ENCODE measurements at regions of chr4 and their contacts with region 1.

Region 1: DNA sequence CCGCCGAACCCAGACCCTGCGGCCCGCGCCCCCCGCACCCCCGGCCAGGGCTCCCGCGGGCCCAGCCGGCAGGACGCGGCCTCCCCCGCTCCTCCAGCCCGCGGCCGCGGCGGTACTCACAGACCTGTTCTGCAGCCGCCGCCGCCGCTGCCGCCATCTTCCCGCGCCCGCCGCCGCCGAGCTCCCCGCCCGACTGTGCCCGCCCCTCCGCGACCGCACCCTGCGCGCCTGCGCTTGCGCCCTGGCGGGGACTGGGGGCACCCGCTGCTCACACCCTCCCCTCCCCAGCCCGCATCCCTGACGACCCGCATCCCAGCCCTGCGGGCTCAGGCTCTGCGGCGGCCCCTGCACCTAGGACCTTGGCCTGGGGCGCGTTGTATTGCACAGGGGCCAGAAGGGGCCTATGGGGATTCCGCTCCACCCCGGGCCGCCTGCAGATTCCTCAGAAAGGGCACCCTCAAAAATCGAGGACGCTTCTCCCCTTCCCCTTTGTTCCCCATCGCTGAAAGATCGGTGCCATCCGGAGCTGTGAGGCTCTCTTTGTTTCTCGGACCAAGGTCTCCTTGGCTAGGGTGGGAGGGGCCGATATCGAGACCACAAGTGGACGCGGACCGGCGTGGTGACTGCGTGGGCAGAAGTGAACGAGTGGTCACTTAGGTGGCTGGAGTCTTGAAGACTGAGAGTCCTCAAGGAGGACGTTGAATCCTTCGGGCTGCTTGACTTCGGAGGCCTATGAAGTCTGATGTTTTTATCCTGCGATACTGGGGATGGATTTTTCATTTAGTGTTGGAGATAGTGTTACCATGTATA is at the start of gene SGCB:
- DNase-seq: peak; percentile 53
- H3K4me3 ChIP-seq: peak within 1 kb of the TSS; percentile 73 to 82
- H3K27ac ChIP-seq: peak within 1 kb of the TSS; percentile 66 to 68
- H3K4me1 ChIP-seq: no peaks in the 10 kb centered on the region
- H3K27me3 ChIP-seq: no peaks in the 10 kb centered on the region
- CTCF ChIP-seq: no peak
- POLR2A ChIP-seq: peak; percentile 20
- total RNA-seq, gene SGCB: 17.1 to 44.0 TPM

Region 2: GRCh38 chr4:51842554-51843308 is 195.6 kb before region 1 on chr4 and contains the start of gene DCUN1D4:
- intact Hi-C with region 1: loop called (anchors 5 kb)
- DNase-seq: peak; percentile 100
- H3K4me3 ChIP-seq: peak within 1 kb of the TSS; percentile 89 to 94
- H3K27ac ChIP-seq: peak within 1 kb of the TSS; percentile 89 to 93
- H3K4me1 ChIP-seq: no peaks in the 10 kb centered on the region
- H3K27me3 ChIP-seq: no peaks in the 10 kb centered on the region
- CTCF ChIP-seq: peak; percentile 52 to 93 (median 75)
- POLR2A ChIP-seq: peak; percentile 78
- total RNA-seq, gene DCUN1D4: 23.0 to 49.1 TPM

Region 3: DNA sequence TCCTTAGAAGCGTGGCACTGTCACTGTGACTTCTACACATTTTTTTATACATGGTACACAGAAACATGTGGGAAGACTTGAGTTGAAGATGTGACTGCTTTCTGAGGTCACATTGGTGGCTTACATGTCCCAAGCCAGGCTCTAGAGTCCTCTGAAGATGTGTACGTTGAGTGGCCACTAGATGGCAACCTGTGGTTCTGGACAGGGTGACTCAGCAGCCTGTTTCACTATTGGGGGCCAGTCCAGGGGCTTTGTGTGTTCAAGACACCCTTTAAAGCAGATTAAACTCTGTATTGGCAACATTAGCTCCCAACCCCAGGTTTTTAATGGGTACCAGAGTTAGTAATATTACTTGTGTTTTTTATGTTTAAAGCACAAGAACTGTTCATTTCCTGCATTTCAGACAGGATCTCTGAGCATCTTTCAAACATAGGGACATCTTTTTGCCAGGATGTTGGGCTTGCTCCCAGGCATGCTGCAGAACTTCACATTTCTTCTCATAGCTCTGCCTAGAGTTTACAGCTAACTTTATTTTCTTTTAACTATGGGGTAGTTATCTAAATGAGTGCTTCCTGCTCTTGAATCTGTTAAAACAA is 142.4 kb before region 1 on chr4:
- intact Hi-C with region 1: loop called (anchors 5 kb)
- DNase-seq: peak; percentile 51
- H3K4me3 ChIP-seq: no peak overlapping the region
- H3K27ac ChIP-seq: no peak overlapping the region
- H3K4me1 ChIP-seq: no peaks in the 10 kb centered on the region
- H3K27me3 ChIP-seq: no peaks in the 10 kb centered on the region
- CTCF ChIP-seq: peak; percentile 45 to 58 (median 52)
- POLR2A ChIP-seq: no peak

Region 4: GRCh38 chr4:51963841-51964517 is 74.3 kb before region 1 on chr4:
- intact Hi-C with region 1: no loop called
- DNase-seq: no peak
- H3K4me3 ChIP-seq: no peak overlapping the region
- H3K27ac ChIP-seq: no peak overlapping the region
- H3K4me1 ChIP-seq: no peaks in the 10 kb centered on the region
- H3K27me3 ChIP-seq: no peaks in the 10 kb centered on the region
- CTCF ChIP-seq: no peak
- POLR2A ChIP-seq: no peak

Region 5: GRCh38 chr4:52199574-52200338 is 161.4 kb after region 1 on chr4:
- intact Hi-C with region 1: loop called (anchors 10 kb)
- DNase-seq: no peak
- H3K4me3 ChIP-seq: no peak overlapping the region
- H3K27ac ChIP-seq: no peak overlapping the region
- H3K4me1 ChIP-seq: no peaks in the 10 kb centered on the region
- H3K27me3 ChIP-seq: no peaks in the 10 kb centered on the region
- CTCF ChIP-seq: no peak
- POLR2A ChIP-seq: no peak